Esophagus muscularis mucosa (tissue), 4 donors: ENCODE measurements at regions of chr18 and their contacts with region 1.

Region 1: GRCh38 chr18:55405893-55406406 is 182.0 kb downstream of the TCF4 start:
- DNase-seq: no peak
- H3K4me3 ChIP-seq: no peak overlapping the region
- H3K27ac ChIP-seq: peak overlapping the region; percentile 40 to 78 (median 66)
- H3K4me1 ChIP-seq: peaks cover 15 to 41% (median 39%) of the 10 kb centered on the region in 4 donors
- H3K27me3 ChIP-seq: no peaks in the 10 kb centered on the region
- CTCF ChIP-seq: no peak
- EP300 ChIP-seq: no peak
- POLR2A ChIP-seq: no peak

Region 2: DNA sequence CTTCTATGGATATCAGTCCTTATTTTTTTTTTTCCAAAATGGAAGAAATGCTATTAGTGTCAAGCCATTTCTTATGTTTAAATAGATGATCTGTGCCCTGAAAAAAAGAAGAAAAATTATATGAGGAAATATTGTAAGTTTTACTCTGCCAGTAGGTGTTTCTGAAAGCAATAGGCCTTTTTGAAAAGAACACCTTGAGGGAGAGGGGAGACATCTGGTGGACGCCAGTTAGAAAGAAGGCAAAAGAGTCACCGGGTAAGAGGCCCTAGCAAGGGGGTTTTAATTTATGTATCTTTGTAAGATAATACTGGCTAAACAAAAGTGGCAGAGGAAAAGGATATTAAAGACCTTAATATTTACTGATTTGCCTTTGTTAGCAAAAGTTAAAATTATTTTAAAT is 758.8 kb before region 1 on chr18:
- intact Hi-C with region 1: no loop called
- DNase-seq: no peak
- H3K4me3 ChIP-seq: no peak overlapping the region
- H3K27ac ChIP-seq: no peak overlapping the region
- H3K4me1 ChIP-seq: no peaks in the 10 kb centered on the region
- H3K27me3 ChIP-seq: no peaks in the 10 kb centered on the region
- CTCF ChIP-seq: no peak
- EP300 ChIP-seq: no peak
- POLR2A ChIP-seq: no peak

Region 3: GRCh38 chr18:55322178-55322735 is 83.7 kb before region 1 on chr18:
- intact Hi-C with region 1: loop called (anchors 10 kb)
- DNase-seq: no peak
- H3K4me3 ChIP-seq: peak overlapping the region; percentile 60 to 77 (median 65)
- H3K27ac ChIP-seq: peak overlapping the region; percentile 88 to 94 (median 91)
- H3K4me1 ChIP-seq: peaks cover 24 to 48% (median 31%) of the 10 kb centered on the region in 4 donors
- H3K27me3 ChIP-seq: no peaks in the 10 kb centered on the region
- CTCF ChIP-seq: peak in 1 of 3 experiments; percentile 11
- EP300 ChIP-seq: no peak
- POLR2A ChIP-seq: no peak